ENCODE measurements at regions of chr14 and their contacts with region 1.

Region 1: GRCh38 chr14:50773632-50774541 is 57.1 kb downstream of the NIN start:
- DNase-seq: peak in 1 of 9 donors; percentile 38
- ATAC-seq: peak; percentile 65
- H3K4me3 ChIP-seq: no peak overlapping the region
- H3K4me3 Mint-ChIP-seq: peak overlapping the region in 3 of 10 donors; percentile 1 to 27 (median 18)
- H3K27ac ChIP-seq: no peak overlapping the region
- H3K27ac Mint-ChIP-seq: peak overlapping the region in 8 of 9 donors; percentile 1 to 78 (median 37)
- H3K4me1 ChIP-seq: peaks cover 9 to 13% of the 10 kb centered on the region in 2 donors
- H3K4me1 Mint-ChIP-seq: peaks cover 17 to 41% (median 28%) of the 10 kb centered on the region in 7 donors
- H3K27me3 ChIP-seq: no peaks in the 10 kb centered on the region
- H3K27me3 Mint-ChIP-seq: no peaks in the 10 kb centered on the region

Region 2: DNA sequence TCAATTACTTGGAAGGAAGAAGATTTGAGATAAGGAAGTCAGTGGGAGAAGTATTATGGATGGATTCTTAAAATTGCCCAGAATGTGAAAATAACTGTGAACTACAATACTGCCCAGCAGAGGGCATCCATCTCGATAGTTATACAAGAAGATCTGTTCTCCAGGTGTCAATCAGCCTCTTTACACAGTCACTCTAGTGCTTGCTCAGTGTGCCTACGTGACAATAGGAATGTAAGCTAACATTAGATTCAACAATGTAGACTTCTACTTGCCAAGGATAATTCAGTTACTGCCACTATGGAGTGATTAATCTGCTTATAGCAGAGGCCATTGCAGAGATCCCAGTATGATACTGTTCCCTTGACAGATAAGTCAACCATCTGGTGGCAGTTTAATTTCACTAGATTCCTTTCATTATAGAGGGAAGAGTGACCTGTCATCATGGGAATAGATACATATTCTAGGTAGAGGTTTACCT is 230.9 kb before region 1 on chr14:
- CTCF ChIA-PET with region 1: interaction called, 3 read pairs
- POLR2A ChIA-PET with region 1: no interaction called
- intact Hi-C with region 1: loop called (anchors 1 kb)
- DNase-seq: peak in 7 of 9 donors; percentile 5 to 51 (median 38)
- ATAC-seq: peak; percentile 84
- H3K4me3 ChIP-seq: no peak overlapping the region
- H3K4me3 Mint-ChIP-seq: no peak overlapping the region
- H3K27ac ChIP-seq: no peak overlapping the region
- H3K27ac Mint-ChIP-seq: no peak overlapping the region
- H3K4me1 ChIP-seq: no peaks in the 10 kb centered on the region
- H3K4me1 Mint-ChIP-seq: peaks cover 5 to 13% (median 12%) of the 10 kb centered on the region in 7 donors
- H3K27me3 ChIP-seq: no peaks in the 10 kb centered on the region
- H3K27me3 Mint-ChIP-seq: peaks cover 0 to 7% (median 0%) of the 10 kb centered on the region in 5 donors

Region 3: DNA sequence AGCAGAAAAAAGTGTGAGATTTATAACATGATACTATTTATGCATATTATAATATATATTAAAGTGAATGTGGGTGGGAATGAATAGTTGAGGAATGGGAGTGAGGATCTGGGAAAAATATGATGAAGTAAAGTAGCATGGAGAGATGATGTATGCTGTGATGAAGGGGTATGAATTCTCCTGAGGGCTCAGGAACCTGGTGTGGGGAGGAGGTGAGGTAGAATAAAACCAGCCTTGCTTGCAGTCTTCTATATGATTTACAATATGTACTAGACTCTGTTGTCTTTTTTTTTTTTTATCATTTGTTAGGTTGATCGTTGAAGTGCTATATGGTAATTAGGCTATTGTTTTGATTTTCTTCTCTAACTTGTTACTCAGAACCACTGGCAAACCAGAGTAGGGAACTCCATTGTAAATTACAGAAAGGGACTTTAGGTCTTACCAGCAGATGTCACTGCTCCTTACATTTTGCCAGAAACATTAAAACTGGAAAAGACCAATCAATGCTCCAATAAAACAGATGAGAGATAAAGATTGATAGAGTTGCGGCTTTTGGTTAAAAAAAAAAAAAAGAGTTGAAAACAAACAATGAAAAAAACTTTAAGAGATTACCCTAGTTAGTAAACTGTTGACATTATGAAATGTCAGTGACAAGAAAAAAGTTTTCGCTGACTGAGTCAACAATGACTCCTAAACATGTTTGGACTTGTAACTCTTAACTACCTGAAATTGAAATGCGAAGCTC is 174.0 kb before region 1 on chr14:
- CTCF ChIA-PET with region 1: interaction called, 6 read pairs
- POLR2A ChIA-PET with region 1: no interaction called
- intact Hi-C with region 1: loop called (anchors 1 kb)
- DNase-seq: peak in 4 of 9 donors; percentile 7 to 21 (median 16)
- ATAC-seq: no peak
- H3K4me3 ChIP-seq: no peak overlapping the region
- H3K4me3 Mint-ChIP-seq: no peak overlapping the region
- H3K27ac ChIP-seq: no peak overlapping the region
- H3K27ac Mint-ChIP-seq: no peak overlapping the region
- H3K4me1 ChIP-seq: no peaks in the 10 kb centered on the region
- H3K4me1 Mint-ChIP-seq: peaks cover 0 to 4% (median 0%) of the 10 kb centered on the region in 7 donors
- H3K27me3 ChIP-seq: no peaks in the 10 kb centered on the region
- H3K27me3 Mint-ChIP-seq: peaks cover 0 to 3% (median 0%) of the 10 kb centered on the region in 5 donors

Region 4: GRCh38 chr14:50619556-50620141 is 154.2 kb before region 1 on chr14:
- CTCF ChIA-PET with region 1: no interaction called
- POLR2A ChIA-PET with region 1: no interaction called
- intact Hi-C with region 1: loop called (anchors 1 kb)
- DNase-seq: peak in 3 of 9 donors; percentile 7 to 11 (median 7)
- ATAC-seq: peak; percentile 41
- H3K4me3 ChIP-seq: no peak overlapping the region
- H3K4me3 Mint-ChIP-seq: no peak overlapping the region
- H3K27ac ChIP-seq: no peak overlapping the region
- H3K27ac Mint-ChIP-seq: no peak overlapping the region
- H3K4me1 ChIP-seq: no peaks in the 10 kb centered on the region
- H3K4me1 Mint-ChIP-seq: no peaks in the 10 kb centered on the region
- H3K27me3 ChIP-seq: no peaks in the 10 kb centered on the region
- H3K27me3 Mint-ChIP-seq: no peaks in the 10 kb centered on the region

Region 5: GRCh38 chr14:50688875-50689274 is 85.0 kb before region 1 on chr14:
- CTCF ChIA-PET with region 1: no interaction called
- POLR2A ChIA-PET with region 1: no interaction called
- intact Hi-C with region 1: no loop called
- DNase-seq: no peak
- ATAC-seq: no peak
- H3K4me3 ChIP-seq: no peak overlapping the region
- H3K4me3 Mint-ChIP-seq: no peak overlapping the region
- H3K27ac ChIP-seq: no peak overlapping the region
- H3K27ac Mint-ChIP-seq: no peak overlapping the region
- H3K4me1 ChIP-seq: no peaks in the 10 kb centered on the region
- H3K4me1 Mint-ChIP-seq: no peaks in the 10 kb centered on the region
- H3K27me3 ChIP-seq: no peaks in the 10 kb centered on the region
- H3K27me3 Mint-ChIP-seq: peaks cover 0 to 21% (median 4%) of the 10 kb centered on the region in 5 donors

Region 6: DNA sequence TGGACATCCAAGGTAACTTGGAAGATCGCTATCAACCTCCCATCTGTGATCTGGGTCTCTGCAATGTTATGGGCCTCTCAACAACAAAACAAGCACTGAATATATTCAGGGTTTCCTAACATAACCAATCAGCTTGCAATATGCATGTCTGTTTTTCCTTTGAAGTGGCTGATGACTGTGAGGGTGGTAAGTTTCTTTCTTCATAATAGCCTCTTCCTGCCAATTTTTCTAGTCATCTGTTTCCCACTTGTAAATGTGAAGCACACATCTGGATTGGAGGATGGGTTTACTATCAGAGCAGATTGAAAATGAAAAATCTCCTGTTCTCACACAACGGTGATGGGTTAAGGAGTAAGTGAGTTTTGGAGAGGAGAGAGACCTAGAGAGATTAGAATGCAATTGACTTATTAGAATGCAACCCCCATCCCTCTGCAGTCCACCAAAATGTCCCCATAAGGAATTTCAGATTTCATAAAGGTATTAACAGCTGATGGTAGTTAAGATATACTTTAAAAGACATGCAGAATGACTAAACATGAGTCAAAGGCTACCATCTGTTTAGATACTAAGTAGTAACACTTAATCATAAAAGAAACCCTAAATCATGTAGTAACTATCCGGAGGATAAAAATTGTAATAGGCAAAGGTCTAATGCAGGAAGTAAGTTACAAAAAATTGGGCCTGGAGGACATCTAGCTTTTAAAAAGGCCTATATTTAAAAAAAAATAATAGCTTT is 47.3 kb before region 1 on chr14:
- CTCF ChIA-PET with region 1: no interaction called
- POLR2A ChIA-PET with region 1: no interaction called
- intact Hi-C with region 1: loop called in 1 of 2 experiments (anchors 5 kb)
- DNase-seq: peak in 5 of 9 donors; percentile 16 to 50 (median 37)
- ATAC-seq: peak; percentile 66
- H3K4me3 ChIP-seq: no peak overlapping the region
- H3K4me3 Mint-ChIP-seq: peak overlapping the region in 7 of 10 donors; percentile 0 to 87 (median 26)
- H3K27ac ChIP-seq: peak overlapping the region; percentile 32
- H3K27ac Mint-ChIP-seq: peak overlapping the region; percentile 57 to 97 (median 79)
- H3K4me1 ChIP-seq: peaks cover 10 to 19% of the 10 kb centered on the region in 2 donors
- H3K4me1 Mint-ChIP-seq: peaks cover 11 to 39% (median 29%) of the 10 kb centered on the region in 7 donors
- H3K27me3 ChIP-seq: no peaks in the 10 kb centered on the region
- H3K27me3 Mint-ChIP-seq: no peaks in the 10 kb centered on the region

Region 7: GRCh38 chr14:50762001-50762930 is 11.6 kb before region 1 on chr14:
- CTCF ChIA-PET with region 1: interaction called, 21 read pairs
- POLR2A ChIA-PET with region 1: interaction called, 7 read pairs
- intact Hi-C with region 1: no loop called
- DNase-seq: no peak
- ATAC-seq: no peak
- H3K4me3 ChIP-seq: no peak overlapping the region
- H3K4me3 Mint-ChIP-seq: no peak overlapping the region
- H3K27ac ChIP-seq: no peak overlapping the region
- H3K27ac Mint-ChIP-seq: peak overlapping the region in 1 of 9 donors; percentile 41
- H3K4me1 ChIP-seq: no peaks in the 10 kb centered on the region
- H3K4me1 Mint-ChIP-seq: peaks cover 0 to 16% (median 2%) of the 10 kb centered on the region in 7 donors
- H3K27me3 ChIP-seq: no peaks in the 10 kb centered on the region
- H3K27me3 Mint-ChIP-seq: no peaks in the 10 kb centered on the region

Region 8: GRCh38 chr14:51304941-51305340 is 531.1 kb after region 1 on chr14:
- CTCF ChIA-PET with region 1: no interaction called
- POLR2A ChIA-PET with region 1: no interaction called
- intact Hi-C with region 1: no loop called
- DNase-seq: no peak
- ATAC-seq: no peak
- H3K4me3 ChIP-seq: no peak overlapping the region
- H3K4me3 Mint-ChIP-seq: no peak overlapping the region
- H3K27ac ChIP-seq: no peak overlapping the region
- H3K27ac Mint-ChIP-seq: no peak overlapping the region
- H3K4me1 ChIP-seq: no peaks in the 10 kb centered on the region
- H3K4me1 Mint-ChIP-seq: no peaks in the 10 kb centered on the region
- H3K27me3 ChIP-seq: no peaks in the 10 kb centered on the region
- H3K27me3 Mint-ChIP-seq: peaks cover 0 to 7% (median 0%) of the 10 kb centered on the region in 5 donors

Measured in naive thymus-derived CD4-positive, alpha-beta T cell (primary cell).